Aorta (tissue), 5 donors: ENCODE measurements at regions of chr1 and their contacts with region 1.

Region 1: GRCh38 chr1:200738740-200739498 is at the start of gene CAMSAP2:
- DNase-seq: peak; percentile 93 to 96
- ATAC-seq: peak; percentile 93
- H3K4me3 ChIP-seq: peak within 1 kb of the TSS; percentile 70 to 74
- H3K27ac ChIP-seq: peak within 1 kb of the TSS; percentile 87 to 97
- H3K4me1 ChIP-seq: peaks cover 0 to under 1% of the 10 kb centered on the region in 2 donors
- H3K27me3 ChIP-seq: no peaks in the 10 kb centered on the region
- total RNA-seq, gene CAMSAP2: 46.9 to 51.9 TPM

Region 2: GRCh38 chr1:200669314-200670241 is 69.3 kb before region 1 on chr1 and contains the start of gene DDX59:
- intact Hi-C with region 1: loop called (anchors 2 to 5 kb)
- DNase-seq: peak; percentile 98
- ATAC-seq: peak; percentile 97
- H3K4me3 ChIP-seq: peak within 1 kb of the TSS; percentile 57 to 71
- H3K27ac ChIP-seq: peak within 1 kb of the TSS; percentile 89 to 92
- H3K4me1 ChIP-seq: peaks cover 1 to 13% of the 10 kb centered on the region in 2 donors
- H3K27me3 ChIP-seq: no peaks in the 10 kb centered on the region
- total RNA-seq, gene DDX59: 22.9 to 28.7 TPM

Region 3: GRCh38 chr1:200780545-200781369 is 41.8 kb after region 1 on chr1:
- intact Hi-C with region 1: loop called in 1 of 2 experiments (anchors 5 kb)
- DNase-seq: no peak
- ATAC-seq: no peak
- H3K4me3 ChIP-seq: peak overlapping the region in 1 of 2 donors; percentile 18
- H3K27ac ChIP-seq: no peak overlapping the region
- H3K4me1 ChIP-seq: peaks cover 0 to 5% of the 10 kb centered on the region in 2 donors
- H3K27me3 ChIP-seq: no peaks in the 10 kb centered on the region